MCF 10A (cell line): ENCODE measurements at regions of chr2 and their contacts with region 1.

Region 1: GRCh38 chr2:31333527-31334183 is 80.9 kb downstream of the XDH start:
- DNase-seq: peak; percentile 83
- H3K4me3 Mint-ChIP-seq: no peak overlapping the region
- H3K27ac Mint-ChIP-seq: no peak overlapping the region
- H3K4me1 Mint-ChIP-seq: peaks cover 31% of the 10 kb centered on the region
- H3K27me3 Mint-ChIP-seq: no peaks in the 10 kb centered on the region
- CTCF ChIP-seq: peak; percentile 96

Region 2: GRCh38 chr2:30666307-30666874 is 667.3 kb before region 1 on chr2:
- CTCF ChIA-PET with region 1: no interaction called
- POLR2A ChIA-PET with region 1: no interaction called
- intact Hi-C with region 1: no loop called
- DNase-seq: peak; percentile 84
- H3K4me3 Mint-ChIP-seq: no peak overlapping the region
- H3K27ac Mint-ChIP-seq: no peak overlapping the region
- H3K4me1 Mint-ChIP-seq: peaks cover 8% of the 10 kb centered on the region
- H3K27me3 Mint-ChIP-seq: no peaks in the 10 kb centered on the region
- CTCF ChIP-seq: no peak

Region 3: DNA sequence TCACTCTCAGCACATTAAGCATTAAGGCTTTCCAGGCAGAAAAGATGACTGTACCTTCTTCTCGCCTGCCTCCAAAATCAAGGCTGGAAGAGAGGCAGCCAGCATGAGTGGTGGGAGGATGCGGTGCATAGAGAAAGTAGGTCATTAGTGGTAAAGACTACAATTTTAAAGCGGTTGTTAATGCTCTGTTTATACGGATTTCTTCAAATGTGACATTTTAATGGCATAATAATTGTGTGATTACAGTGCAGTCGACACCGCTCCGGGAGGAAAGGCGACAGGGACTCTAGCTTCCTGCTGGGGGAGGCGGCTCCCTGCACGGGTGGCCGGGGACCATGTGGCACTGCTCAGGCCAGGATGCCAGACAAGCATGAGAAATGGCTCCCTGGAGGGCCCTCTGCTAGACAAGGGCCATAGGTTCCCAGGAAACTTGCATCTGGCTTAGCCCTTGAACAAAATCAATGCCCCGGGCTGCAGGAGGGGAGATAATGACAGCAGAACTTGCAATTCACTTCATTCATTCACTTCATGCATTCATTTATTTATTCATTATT is 325.0 kb before region 1 on chr2:
- CTCF ChIA-PET with region 1: no interaction called
- POLR2A ChIA-PET with region 1: no interaction called
- intact Hi-C with region 1: no loop called
- DNase-seq: no peak
- H3K4me3 Mint-ChIP-seq: no peak overlapping the region
- H3K27ac Mint-ChIP-seq: no peak overlapping the region
- H3K4me1 Mint-ChIP-seq: no peaks in the 10 kb centered on the region
- H3K27me3 Mint-ChIP-seq: no peaks in the 10 kb centered on the region
- CTCF ChIP-seq: no peak

Region 4: GRCh38 chr2:31138037-31138962 is 195.4 kb before region 1 on chr2 and contains the start of gene GALNT14:
- CTCF ChIA-PET with region 1: interaction called, 6 read pairs
- POLR2A ChIA-PET with region 1: no interaction called
- intact Hi-C with region 1: loop called (anchors 1 kb)
- DNase-seq: peak; percentile 59
- H3K4me3 Mint-ChIP-seq: peak within 1 kb of the TSS; percentile 66
- H3K27ac Mint-ChIP-seq: no peak within 1 kb of the TSS
- H3K4me1 Mint-ChIP-seq: no peaks in the 10 kb centered on the region
- H3K27me3 Mint-ChIP-seq: peaks cover 39% of the 10 kb centered on the region
- CTCF ChIP-seq: peak; percentile 58
- total RNA-seq, gene GALNT14: 4.6 and 6.8 TPM in 2 replicates

Region 5: DNA sequence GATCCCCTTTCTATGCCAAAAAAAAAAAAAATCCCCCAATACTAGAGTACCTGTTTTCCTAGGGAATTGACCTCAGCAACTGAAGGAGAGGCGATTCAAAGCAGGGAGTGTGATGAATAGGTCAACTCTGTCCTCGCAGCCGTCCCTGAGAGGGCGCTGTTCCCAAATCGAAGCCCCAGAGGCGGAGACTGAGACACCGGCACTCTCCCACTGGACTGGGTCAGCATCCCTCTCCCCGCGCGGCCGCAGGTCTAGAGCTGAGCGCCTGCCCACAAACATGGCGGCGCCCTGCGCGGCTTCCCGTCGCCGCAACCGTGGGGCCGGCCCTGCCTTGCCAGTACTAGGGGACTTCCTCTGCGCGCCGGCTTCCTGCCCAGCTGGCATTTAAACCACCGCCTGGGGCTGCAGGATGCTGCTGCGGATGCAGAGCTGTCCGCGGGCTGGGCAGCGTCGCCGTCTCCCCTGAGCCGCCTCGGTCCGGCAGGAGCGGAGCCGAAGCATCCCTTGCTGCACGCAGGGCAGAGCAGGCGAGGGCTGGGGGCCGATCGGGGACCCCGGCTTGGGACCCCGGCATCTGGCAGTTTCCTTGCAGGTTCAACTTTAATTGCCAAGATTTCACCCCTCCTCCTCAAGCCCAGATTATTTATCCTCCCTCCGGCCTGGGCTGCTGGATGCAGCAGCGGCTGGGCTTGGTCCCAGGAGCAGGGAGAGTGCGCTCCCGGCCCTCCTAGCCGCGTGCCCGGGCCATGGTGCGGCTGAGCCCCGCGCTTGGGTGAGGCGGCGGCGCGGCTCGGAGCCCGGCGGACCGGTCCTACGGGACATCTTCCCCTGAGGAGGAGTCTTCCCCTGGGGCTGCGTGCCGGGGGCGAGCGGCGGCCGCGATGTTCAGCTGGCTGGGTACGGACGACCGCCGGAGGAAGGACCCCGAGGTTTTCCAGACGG is 99.6 kb before region 1 on chr2 and contains the start of gene EHD3:
- CTCF ChIA-PET with region 1: interaction called, 3 read pairs
- POLR2A ChIA-PET with region 1: no interaction called
- intact Hi-C with region 1: loop called (anchors 5 kb)
- DNase-seq: peak; percentile 60
- H3K4me3 Mint-ChIP-seq: peak within 1 kb of the TSS; percentile 64
- H3K27ac Mint-ChIP-seq: no peak within 1 kb of the TSS
- H3K4me1 Mint-ChIP-seq: peaks cover 4% of the 10 kb centered on the region
- H3K27me3 Mint-ChIP-seq: peaks cover 46% of the 10 kb centered on the region
- CTCF ChIP-seq: peak; percentile 31
- total RNA-seq, gene EHD3: 0.49 and 0.86 TPM in 2 replicates

Region 6: DNA sequence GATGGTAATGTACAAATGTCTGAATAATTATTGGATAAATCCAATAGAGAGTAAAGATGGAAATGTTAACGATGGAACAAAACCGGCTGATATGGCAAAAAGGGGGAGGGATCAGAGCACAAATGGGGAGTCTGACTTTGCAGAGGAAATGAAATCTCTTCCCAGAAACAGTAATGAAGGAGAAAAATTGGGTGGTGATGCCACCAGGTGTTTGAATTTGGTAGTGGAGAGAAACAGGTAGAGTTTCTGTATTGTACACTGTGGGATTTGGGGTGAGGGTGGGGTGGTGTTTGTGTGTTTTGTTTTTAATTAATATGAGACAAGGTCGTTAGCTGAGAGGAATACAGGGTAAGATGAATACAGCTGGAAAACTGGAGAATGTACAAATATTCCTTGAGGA is 101.3 kb after region 1 on chr2:
- CTCF ChIA-PET with region 1: interaction called, 4 read pairs
- POLR2A ChIA-PET with region 1: no interaction called
- intact Hi-C with region 1: loop called (anchors 1 kb)
- DNase-seq: peak; percentile 55
- H3K4me3 Mint-ChIP-seq: no peak overlapping the region
- H3K27ac Mint-ChIP-seq: no peak overlapping the region
- H3K4me1 Mint-ChIP-seq: peaks cover 8% of the 10 kb centered on the region
- H3K27me3 Mint-ChIP-seq: no peaks in the 10 kb centered on the region
- CTCF ChIP-seq: peak; percentile 38

Region 7: DNA sequence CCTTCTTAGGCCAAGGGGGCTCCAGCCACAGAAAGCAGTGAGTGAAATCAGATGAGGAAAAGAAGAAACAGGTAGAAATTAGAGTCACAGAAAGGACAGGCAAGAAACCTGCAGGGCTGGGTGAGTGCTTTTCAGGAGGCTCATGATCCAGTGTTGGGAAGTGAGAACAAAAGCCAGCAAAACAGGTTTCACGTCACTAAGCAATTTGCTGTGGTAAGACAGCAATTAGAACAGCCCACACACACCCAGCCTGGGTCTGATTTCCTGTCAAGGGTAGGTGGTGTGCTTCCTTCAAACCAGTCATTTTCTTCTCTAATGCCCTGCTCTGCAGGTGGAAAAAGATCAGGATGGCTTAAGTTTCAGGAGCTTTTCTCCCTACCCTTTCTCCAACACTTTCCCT is 133.8 kb after region 1 on chr2:
- CTCF ChIA-PET with region 1: no interaction called
- POLR2A ChIA-PET with region 1: no interaction called
- intact Hi-C with region 1: no loop called
- DNase-seq: no peak
- H3K4me3 Mint-ChIP-seq: no peak overlapping the region
- H3K27ac Mint-ChIP-seq: no peak overlapping the region
- H3K4me1 Mint-ChIP-seq: no peaks in the 10 kb centered on the region
- H3K27me3 Mint-ChIP-seq: no peaks in the 10 kb centered on the region
- CTCF ChIP-seq: no peak